ENCODE measurements at regions of chr11 and their contacts with region 1.

Region 1: GRCh38 chr11:65314501-65315203 is at the start of gene CDC42EP2:
- DNase-seq: peak; percentile 87
- ATAC-seq: peak; percentile 90
- H3K4me3 Mint-ChIP-seq: peak within 1 kb of the TSS; percentile 73
- H3K27ac Mint-ChIP-seq: no peak within 1 kb of the TSS
- H3K4me1 Mint-ChIP-seq: peaks cover 11% of the 10 kb centered on the region
- H3K27me3 Mint-ChIP-seq: peaks cover 5% of the 10 kb centered on the region
- total RNA-seq, gene CDC42EP2: 0.91 to 0.93 TPM

Region 2: DNA sequence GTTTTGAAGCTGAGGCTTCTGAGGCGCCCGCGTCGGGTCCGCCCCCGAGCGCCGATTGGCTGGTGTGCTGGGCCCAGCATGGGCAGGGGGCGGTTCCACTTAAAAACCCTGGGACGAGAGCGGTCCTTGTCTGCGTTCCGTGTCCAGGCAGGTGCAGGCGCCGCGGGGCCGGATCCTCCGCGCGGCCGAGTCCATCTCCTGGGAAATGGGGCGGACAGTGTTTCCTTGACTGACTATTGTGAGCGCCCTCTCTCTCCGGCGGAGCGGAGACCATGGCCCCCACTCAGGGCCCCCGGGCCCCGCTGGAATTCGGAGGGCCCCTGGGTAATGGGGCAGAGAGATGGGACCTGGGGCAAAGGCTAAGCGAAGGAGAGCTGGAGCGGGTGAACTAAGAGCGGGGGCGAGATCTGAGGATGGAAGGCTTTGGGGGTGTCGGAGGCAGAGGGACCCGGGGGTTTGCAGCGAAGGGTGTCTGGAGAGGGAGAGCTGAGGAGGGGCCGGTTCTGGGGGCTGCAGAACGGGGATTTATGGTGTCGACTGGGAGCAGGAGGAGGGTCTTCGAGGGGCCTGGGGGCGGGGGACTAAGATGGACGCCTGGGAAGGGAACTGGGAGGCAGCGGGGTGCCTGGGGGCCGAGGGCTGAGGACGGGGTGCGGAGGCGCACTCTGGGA is 202.8 kb before region 1 on chr11 and contains the start of gene TM7SF2:
- CTCF ChIA-PET with region 1: interaction called, 3 read pairs
- POLR2A ChIA-PET with region 1: no interaction called
- intact Hi-C with region 1: loop called in 1 of 2 experiments (anchors 1 kb)
- DNase-seq: peak; percentile 98
- ATAC-seq: peak; percentile 78
- H3K4me3 Mint-ChIP-seq: peak within 1 kb of the TSS; percentile 83
- H3K27ac Mint-ChIP-seq: peak within 1 kb of the TSS; percentile 74
- H3K4me1 Mint-ChIP-seq: peaks cover 50% of the 10 kb centered on the region
- H3K27me3 Mint-ChIP-seq: no peaks in the 10 kb centered on the region
- total RNA-seq, gene TM7SF2: 17.4 to 18.1 TPM

Region 3: DNA sequence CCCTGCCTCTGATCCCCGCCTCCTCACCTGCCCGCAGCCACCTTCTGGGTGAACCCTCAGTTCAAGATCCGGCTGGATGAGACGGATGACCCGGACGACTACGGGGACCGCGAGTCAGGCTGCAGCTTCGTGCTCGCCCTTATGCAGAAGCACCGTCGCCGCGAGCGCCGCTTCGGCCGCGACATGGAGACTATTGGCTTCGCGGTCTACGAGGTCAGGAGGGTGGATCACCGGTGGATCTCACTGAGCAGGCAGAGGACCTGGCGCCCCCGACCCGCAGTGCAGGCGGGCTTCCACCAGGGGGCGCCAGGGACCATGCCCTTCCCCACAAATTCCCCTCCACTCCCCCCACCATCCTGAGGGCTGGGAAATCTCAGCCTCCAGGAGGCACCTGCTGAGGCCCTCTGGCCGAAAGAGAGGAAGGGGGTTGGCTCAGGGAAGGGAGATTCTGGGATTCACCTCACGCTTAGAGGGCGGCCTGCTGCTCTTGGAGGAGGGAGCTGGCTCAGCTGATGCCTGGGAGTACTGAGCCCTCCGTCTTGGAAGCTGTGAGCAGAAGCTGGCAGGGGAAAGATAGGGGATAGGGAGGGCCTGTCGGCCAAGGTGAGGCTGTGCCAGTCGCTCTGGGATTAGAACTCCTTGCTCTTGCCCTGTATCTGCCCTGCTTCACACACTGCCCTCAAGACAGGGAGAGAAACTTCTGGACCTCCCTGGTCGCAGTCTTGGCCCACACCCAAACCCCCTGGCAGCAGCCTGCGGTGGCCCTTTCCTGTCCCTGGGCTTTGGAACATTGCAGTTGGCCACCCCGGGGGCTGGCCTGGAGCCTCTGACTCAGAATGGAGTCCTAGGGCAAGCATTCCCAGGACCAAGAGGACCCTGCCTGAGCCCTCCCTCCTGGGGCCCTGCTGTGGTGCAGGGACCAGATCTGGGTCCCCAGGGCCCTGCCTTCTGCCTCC is 109.7 kb before region 1 on chr11:
- CTCF ChIA-PET with region 1: interaction called, 6 read pairs
- POLR2A ChIA-PET with region 1: no interaction called
- intact Hi-C with region 1: loop called (anchors 1 to 5 kb)
- DNase-seq: peak; percentile 73
- ATAC-seq: peak; percentile 78
- H3K4me3 Mint-ChIP-seq: no peak overlapping the region
- H3K27ac Mint-ChIP-seq: no peak overlapping the region
- H3K4me1 Mint-ChIP-seq: no peaks in the 10 kb centered on the region
- H3K27me3 Mint-ChIP-seq: no peaks in the 10 kb centered on the region

Region 4: DNA sequence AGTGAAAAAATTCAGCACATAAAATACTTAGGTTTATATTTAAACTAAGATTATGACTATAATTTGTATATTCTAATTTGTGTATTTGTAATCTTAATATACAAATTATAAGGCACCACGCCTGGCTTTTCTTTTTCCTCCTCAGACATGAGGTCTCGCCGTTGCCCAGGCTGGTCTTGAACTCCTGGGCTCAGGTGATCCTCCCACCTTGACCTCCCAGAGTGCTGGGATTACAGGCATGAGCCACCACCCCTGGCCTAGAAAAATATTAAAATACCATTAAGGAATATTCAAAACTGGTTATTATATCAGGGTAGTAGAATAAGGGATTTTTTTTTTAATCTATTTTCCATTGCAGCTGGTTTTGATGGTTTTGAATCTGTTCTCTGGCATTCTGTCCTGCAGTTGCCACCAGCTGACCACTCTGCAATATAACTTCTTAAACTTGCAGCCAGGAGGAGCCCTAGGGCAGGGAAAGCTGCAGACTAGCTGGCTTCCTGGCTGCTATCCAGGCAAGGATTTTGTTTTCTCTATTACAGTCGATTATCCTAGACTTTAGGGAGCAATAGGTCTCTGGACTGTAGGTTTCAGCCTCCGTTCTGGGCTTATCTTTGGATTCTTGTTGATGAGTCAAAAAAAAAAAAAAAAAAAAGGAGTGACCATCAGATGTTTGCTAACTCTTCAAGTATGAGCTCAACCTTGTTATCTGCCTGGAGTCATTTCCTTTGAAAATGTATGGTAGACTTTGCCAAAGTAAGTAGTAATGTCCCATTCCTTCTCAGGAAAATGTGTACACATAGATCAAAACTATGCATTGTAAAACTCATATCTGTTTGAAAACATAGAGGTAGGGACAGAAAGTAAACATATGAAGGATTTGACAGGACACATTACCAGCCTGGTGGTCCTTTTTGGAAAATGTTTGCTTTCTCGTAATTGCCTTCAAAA is 39.6 kb before region 1 on chr11:
- CTCF ChIA-PET with region 1: interaction called, 40 read pairs
- POLR2A ChIA-PET with region 1: no interaction called
- intact Hi-C with region 1: loop called (anchors 1 to 5 kb)
- DNase-seq: peak; percentile 56
- ATAC-seq: peak; percentile 39
- H3K4me3 Mint-ChIP-seq: no peak overlapping the region
- H3K27ac Mint-ChIP-seq: no peak overlapping the region
- H3K4me1 Mint-ChIP-seq: peaks cover 16% of the 10 kb centered on the region
- H3K27me3 Mint-ChIP-seq: no peaks in the 10 kb centered on the region

Region 5: DNA sequence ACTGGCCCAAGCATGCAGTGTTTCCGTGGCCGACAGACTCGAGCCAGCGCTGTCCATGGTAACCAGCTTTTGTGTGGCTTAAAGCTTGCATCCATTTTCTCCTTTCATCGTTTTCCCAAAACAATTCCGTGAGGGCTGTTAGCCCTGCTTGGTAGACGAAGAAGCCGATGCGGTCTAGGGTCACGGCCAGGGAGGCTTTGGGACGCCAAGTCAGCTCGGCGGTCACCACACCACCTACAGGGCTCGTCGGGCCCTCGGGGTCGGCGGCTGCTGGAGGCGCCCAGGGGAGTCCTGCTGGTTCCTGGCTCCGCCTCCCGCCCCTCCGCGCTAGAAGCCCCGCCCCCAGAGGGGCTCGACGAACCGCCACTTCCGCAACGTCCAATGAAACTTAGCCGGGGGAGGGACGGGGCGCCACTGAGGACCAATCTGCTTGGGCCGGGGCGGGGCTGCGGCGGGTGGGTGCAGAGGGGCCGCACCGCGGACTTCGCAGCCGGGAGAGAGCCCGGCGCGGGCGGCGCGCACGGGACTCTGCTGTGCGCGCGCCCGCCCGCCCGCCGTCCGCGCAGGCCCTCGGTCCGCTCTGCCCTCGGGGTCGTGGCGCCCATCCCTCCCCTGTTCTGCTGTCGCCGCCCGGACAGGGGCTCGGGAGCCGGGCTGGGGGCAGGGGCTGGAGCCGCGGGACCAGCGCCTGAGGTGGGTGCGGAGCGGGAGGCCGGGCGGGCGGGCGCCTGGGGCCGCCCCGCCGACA is 39.8 kb after region 1 on chr11 and contains the start of gene TIGD3:
- CTCF ChIA-PET with region 1: interaction called, 5 read pairs
- POLR2A ChIA-PET with region 1: no interaction called
- intact Hi-C with region 1: loop called in 1 of 2 experiments (anchors 1 kb)
- DNase-seq: peak; percentile 98
- ATAC-seq: peak; percentile 99
- H3K4me3 Mint-ChIP-seq: peak within 1 kb of the TSS; percentile 73
- H3K27ac Mint-ChIP-seq: peak within 1 kb of the TSS; percentile 42
- H3K4me1 Mint-ChIP-seq: peaks cover 13% of the 10 kb centered on the region
- H3K27me3 Mint-ChIP-seq: no peaks in the 10 kb centered on the region
- total RNA-seq, gene TIGD3: 0.58 to 1.1 TPM